CD8-positive, alpha-beta T cell (primary cell): ENCODE measurements at regions of chr12 and their contacts with region 1.

Region 1: GRCh38 chr12:101830367-101831325 is at the start of gene GNPTAB:
- DNase-seq: peak; percentile 94 to 98 (median 96)
- ATAC-seq: peak; percentile 93
- H3K4me3 ChIP-seq: peak within 1 kb of the TSS; percentile 73 to 88
- H3K4me3 Mint-ChIP-seq: peak within 1 kb of the TSS; percentile 98
- H3K27ac ChIP-seq: peak within 1 kb of the TSS; percentile 68 to 75
- H3K27ac Mint-ChIP-seq: peak within 1 kb of the TSS; percentile 95
- H3K4me1 ChIP-seq: peaks cover 29% of the 10 kb centered on the region
- H3K4me1 Mint-ChIP-seq: peaks cover 40% of the 10 kb centered on the region
- H3K27me3 ChIP-seq: no peaks in the 10 kb centered on the region
- H3K27me3 Mint-ChIP-seq: no peaks in the 10 kb centered on the region
- CTCF ChIP-seq: peak; percentile 53
- total RNA-seq, gene GNPTAB: 40.4 to 46.9 TPM

Region 2: DNA sequence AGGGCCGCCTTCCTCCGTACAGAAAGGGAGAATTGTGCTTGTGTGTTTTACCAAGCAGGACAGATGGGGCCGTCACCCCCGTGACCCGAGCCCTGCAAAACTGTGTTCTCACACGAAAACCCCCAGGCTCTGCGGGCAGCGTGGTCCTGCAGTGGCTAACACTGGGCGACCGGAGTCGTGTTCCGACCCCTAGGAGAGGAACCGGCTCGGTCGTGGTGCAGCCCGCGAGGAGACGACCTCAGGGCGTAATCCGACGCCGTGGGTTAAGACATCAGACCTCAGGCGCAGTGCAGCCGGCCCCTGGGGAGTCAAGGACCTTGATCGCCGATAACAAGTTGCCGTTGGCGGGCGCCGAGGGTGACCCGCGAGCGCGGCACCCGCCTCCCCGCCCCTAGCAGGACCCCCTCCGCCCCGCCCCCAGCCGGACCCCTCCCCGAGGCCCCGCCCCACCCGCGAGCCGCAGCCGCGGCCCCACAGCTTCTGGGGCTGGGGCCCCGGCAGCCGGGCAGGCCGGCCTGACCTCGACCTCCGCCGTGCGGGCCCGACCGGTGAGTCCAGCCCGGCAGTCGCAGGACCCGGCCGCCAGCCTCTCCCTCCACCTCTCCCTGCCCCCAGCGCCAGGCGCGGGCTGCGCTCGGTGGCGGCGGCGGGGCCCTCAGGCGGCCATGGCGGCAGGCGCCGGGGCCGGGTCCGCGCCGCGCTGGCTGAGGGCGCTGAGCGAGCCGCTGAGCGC is 133.3 kb before region 1 on chr12 and contains the start of gene CHPT1:
- CTCF ChIA-PET with region 1: no interaction called
- POLR2A ChIA-PET with region 1: no interaction called
- intact Hi-C with region 1: loop called (anchors 2 to 5 kb)
- DNase-seq: peak; percentile 5 to 77 (median 56)
- ATAC-seq: peak; percentile 76
- H3K4me3 ChIP-seq: peak within 1 kb of the TSS; percentile 85 to 90
- H3K4me3 Mint-ChIP-seq: peak within 1 kb of the TSS; percentile 93
- H3K27ac ChIP-seq: peak within 1 kb of the TSS; percentile 51 to 58
- H3K27ac Mint-ChIP-seq: peak within 1 kb of the TSS; percentile 81
- H3K4me1 ChIP-seq: peaks cover 18% of the 10 kb centered on the region
- H3K4me1 Mint-ChIP-seq: peaks cover 40% of the 10 kb centered on the region
- H3K27me3 ChIP-seq: no peaks in the 10 kb centered on the region
- H3K27me3 Mint-ChIP-seq: no peaks in the 10 kb centered on the region
- CTCF ChIP-seq: no peak
- total RNA-seq, gene CHPT1: 15.9 to 16.7 TPM

Region 3: GRCh38 chr12:101782273-101782731 is 48.3 kb before region 1 on chr12:
- CTCF ChIA-PET with region 1: interaction called, 21 read pairs
- POLR2A ChIA-PET with region 1: interaction called, 13 read pairs
- intact Hi-C with region 1: no loop called
- DNase-seq: no peak
- ATAC-seq: no peak
- H3K4me3 ChIP-seq: no peak overlapping the region
- H3K4me3 Mint-ChIP-seq: no peak overlapping the region
- H3K27ac ChIP-seq: no peak overlapping the region
- H3K27ac Mint-ChIP-seq: peak overlapping the region; percentile 27
- H3K4me1 ChIP-seq: no peaks in the 10 kb centered on the region
- H3K4me1 Mint-ChIP-seq: no peaks in the 10 kb centered on the region
- H3K27me3 ChIP-seq: no peaks in the 10 kb centered on the region
- H3K27me3 Mint-ChIP-seq: no peaks in the 10 kb centered on the region
- CTCF ChIP-seq: no peak

Region 4: GRCh38 chr12:101803978-101804377 is 26.7 kb before region 1 on chr12:
- CTCF ChIA-PET with region 1: interaction called, 10 read pairs
- POLR2A ChIA-PET with region 1: interaction called, 7 read pairs
- intact Hi-C with region 1: no loop called
- DNase-seq: peak in 2 of 9 experiments; percentile 29 to 42
- ATAC-seq: no peak
- H3K4me3 ChIP-seq: no peak overlapping the region
- H3K4me3 Mint-ChIP-seq: no peak overlapping the region
- H3K27ac ChIP-seq: no peak overlapping the region
- H3K27ac Mint-ChIP-seq: no peak overlapping the region
- H3K4me1 ChIP-seq: peaks cover 4% of the 10 kb centered on the region
- H3K4me1 Mint-ChIP-seq: peaks cover 42% of the 10 kb centered on the region
- H3K27me3 ChIP-seq: no peaks in the 10 kb centered on the region
- H3K27me3 Mint-ChIP-seq: no peaks in the 10 kb centered on the region
- CTCF ChIP-seq: no peak